ENCODE measurements at regions of chr1 and their contacts with region 1.

Region 1: GRCh38 chr1:109959974-109960744 is 24.4 kb upstream of the AHCYL1 start:
- DNase-seq: peak; percentile 96
- ATAC-seq: peak; percentile 93
- H3K4me3 ChIP-seq: peak overlapping the region; percentile 4 to 34 (median 23); a peak in 1 of 6 replicates
- H3K27ac ChIP-seq: peak overlapping the region; percentile 93
- H3K4me1 ChIP-seq: peaks cover 49% of the 10 kb centered on the region
- H3K27me3 ChIP-seq: no peaks in the 10 kb centered on the region
- CTCF ChIP-seq: peak; percentile 57
- EP300 ChIP-seq: peak; percentile 32 to 86; a peak in 3 of 4 replicates
- POLR2A ChIP-seq: no peak
- RAD21 ChIP-seq: peak; percentile 51; the same call in 1 of the 2 replicates

Region 2: DNA sequence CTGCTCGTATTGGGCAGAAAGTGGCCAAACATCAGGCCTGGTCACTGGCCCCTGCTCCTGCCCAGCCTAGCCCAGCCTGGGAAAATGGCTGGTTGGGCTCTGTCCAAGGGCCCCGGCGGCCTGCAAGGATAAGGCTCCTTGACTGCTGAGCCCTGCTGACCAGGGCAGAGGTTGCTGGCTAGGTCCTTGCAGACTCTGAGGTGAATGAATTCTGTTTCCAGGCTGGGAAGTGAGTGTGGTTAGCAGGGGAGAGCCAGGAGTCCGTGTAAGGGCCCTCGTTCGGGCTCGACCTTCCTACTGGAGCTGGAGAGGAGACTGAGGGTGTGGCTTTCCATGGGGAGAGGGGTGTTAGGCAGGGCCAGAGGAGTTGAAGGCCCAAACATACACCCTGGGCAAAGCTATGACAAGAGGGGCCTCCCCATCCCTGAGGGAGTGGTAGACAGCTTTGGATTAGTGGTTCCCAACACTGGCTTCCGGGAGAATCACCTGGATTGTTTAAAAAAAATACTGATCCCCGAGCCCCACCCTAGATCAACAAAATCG is 28.9 kb before region 1 on chr1:
- CTCF ChIA-PET with region 1: interaction called, 5 read pairs
- POLR2A ChIA-PET with region 1: interaction called, 35 read pairs
- in situ Hi-C with region 1: no loop called
- intact Hi-C with region 1: loop called (anchors 1 kb)
- DNase-seq: peak; percentile 82
- ATAC-seq: peak; percentile 76
- H3K4me3 ChIP-seq: peak overlapping the region in 2 of 3 experiments; percentile 17 to 31; a peak in 1 of 6 replicates
- H3K27ac ChIP-seq: peak overlapping the region; percentile 53
- H3K4me1 ChIP-seq: peaks cover 94% of the 10 kb centered on the region
- H3K27me3 ChIP-seq: no peaks in the 10 kb centered on the region
- CTCF ChIP-seq: no peak
- EP300 ChIP-seq: peak; percentile 45 to 80; a peak in 3 of 4 replicates
- POLR2A ChIP-seq: peak in 1 of 2 experiments; percentile 38; a peak in 1 of 4 replicates
- RAD21 ChIP-seq: peak; percentile 14; the same call in 1 of the 2 replicates

Region 3: DNA sequence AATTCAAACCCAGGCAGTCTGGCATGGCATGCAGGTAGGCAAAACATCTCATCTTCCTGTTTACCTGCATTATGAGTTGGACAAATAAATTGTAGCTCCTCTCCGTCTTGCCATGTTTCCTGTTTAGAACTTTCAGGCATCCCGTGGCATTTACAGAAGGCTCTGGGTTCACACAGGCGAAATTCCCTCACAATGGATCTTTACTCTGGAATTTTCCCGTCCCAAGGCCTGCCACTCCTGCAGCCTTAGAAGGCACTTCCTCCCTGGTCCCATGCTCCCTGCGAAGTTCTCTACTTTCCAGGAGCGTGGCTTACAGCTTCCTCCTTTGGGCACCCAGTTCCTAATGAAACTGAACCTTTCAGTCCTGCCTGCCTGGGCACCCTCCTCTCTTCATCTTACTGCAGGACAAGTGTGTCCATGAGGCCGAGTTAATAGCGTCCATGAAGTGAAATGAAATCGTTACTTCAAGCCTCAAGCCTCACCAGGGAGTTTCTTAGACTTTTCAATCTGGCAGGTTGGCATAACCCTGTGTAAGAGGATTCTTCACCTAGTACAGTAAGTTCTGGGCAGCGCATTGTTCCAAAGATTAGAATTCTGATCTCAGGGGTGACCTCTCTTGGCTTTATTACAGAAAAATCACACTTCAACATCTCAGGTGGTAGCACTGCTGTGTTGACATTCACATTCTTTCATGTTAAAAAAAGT is 12.4 kb before region 1 on chr1:
- CTCF ChIA-PET with region 1: no interaction called
- POLR2A ChIA-PET with region 1: interaction called, 25 read pairs
- in situ Hi-C with region 1: no loop called
- intact Hi-C with region 1: no loop called
- DNase-seq: no peak
- ATAC-seq: peak; percentile 82
- H3K4me3 ChIP-seq: peak overlapping the region in 2 of 3 experiments; percentile 20 to 46; a peak in 4 of 6 replicates
- H3K27ac ChIP-seq: peak overlapping the region; percentile 62
- H3K4me1 ChIP-seq: peaks cover 38% of the 10 kb centered on the region
- H3K27me3 ChIP-seq: no peaks in the 10 kb centered on the region
- CTCF ChIP-seq: no peak
- EP300 ChIP-seq: peak in 1 of 2 experiments; percentile 39; a peak in 1 of 4 replicates
- POLR2A ChIP-seq: no peak
- RAD21 ChIP-seq: no peak

Measured in HepG2 (cell line).